Activated naive CD4-positive, alpha-beta T cell treated with anti-CD3 and anti-CD28 coated beads, Interleukin-2, amount 10 ng/mL, durations not matched to agents 7 days and 5 days (primary cell): ENCODE measurements at regions of chr9 and their contacts with region 1.

Region 1: GRCh38 chr9:113275157-113276131 is at the starts of genes CDC26 and PRPF4:
- DNase-seq: peak; percentile 98
- H3K4me3 Mint-ChIP-seq: no peak within 1 kb of the TSS
- H3K27ac Mint-ChIP-seq: no peak within 1 kb of the TSS
- H3K4me1 Mint-ChIP-seq: peaks cover 24% of the 10 kb centered on the region
- H3K27me3 Mint-ChIP-seq: no peaks in the 10 kb centered on the region

Region 2: GRCh38 chr9:113221003-113221799 is 54.2 kb before region 1 on chr9 and contains the starts of genes FKBP15 and SLC31A1:
- CTCF ChIA-PET with region 1: interaction called, 19 read pairs
- DNase-seq: peak; percentile 97
- H3K4me3 Mint-ChIP-seq: peak within 1 kb of the TSS; percentile 85
- H3K27ac Mint-ChIP-seq: peak within 1 kb of the TSS; percentile 92
- H3K4me1 Mint-ChIP-seq: peaks cover 47% of the 10 kb centered on the region
- H3K27me3 Mint-ChIP-seq: no peaks in the 10 kb centered on the region

Region 3: GRCh38 chr9:113255438-113255837 is 20.0 kb before region 1 on chr9:
- CTCF ChIA-PET with region 1: no interaction called
- DNase-seq: no peak
- H3K4me3 Mint-ChIP-seq: no peak overlapping the region
- H3K27ac Mint-ChIP-seq: no peak overlapping the region
- H3K4me1 Mint-ChIP-seq: no peaks in the 10 kb centered on the region
- H3K27me3 Mint-ChIP-seq: no peaks in the 10 kb centered on the region

Region 4: DNA sequence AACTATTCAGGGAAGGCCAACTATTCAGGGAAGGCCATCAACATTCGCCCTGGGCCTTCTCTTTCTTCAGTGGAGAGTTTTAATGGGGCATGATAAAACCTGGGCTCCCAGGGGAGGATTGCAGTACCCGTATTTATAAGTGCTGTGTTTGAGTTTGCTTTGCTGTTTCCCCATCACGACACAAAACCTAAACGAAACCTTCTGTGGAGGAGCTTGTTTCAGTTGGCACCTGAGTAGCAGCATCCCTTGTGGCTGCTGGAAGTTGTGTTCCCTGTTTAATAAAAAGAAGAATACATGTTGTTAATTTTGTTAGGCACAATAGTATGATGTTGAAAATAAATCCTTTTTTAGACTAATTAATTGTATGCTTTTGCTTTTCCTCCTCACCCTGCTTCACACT is 56.3 kb after region 1 on chr9:
- CTCF ChIA-PET with region 1: no interaction called
- DNase-seq: no peak
- H3K4me3 Mint-ChIP-seq: no peak overlapping the region
- H3K27ac Mint-ChIP-seq: no peak overlapping the region
- H3K4me1 Mint-ChIP-seq: peaks cover 13% of the 10 kb centered on the region
- H3K27me3 Mint-ChIP-seq: no peaks in the 10 kb centered on the region